Transverse colon (tissue), 4 donors: ENCODE measurements at regions of chr17 and their contacts with region 1.

Region 1: DNA sequence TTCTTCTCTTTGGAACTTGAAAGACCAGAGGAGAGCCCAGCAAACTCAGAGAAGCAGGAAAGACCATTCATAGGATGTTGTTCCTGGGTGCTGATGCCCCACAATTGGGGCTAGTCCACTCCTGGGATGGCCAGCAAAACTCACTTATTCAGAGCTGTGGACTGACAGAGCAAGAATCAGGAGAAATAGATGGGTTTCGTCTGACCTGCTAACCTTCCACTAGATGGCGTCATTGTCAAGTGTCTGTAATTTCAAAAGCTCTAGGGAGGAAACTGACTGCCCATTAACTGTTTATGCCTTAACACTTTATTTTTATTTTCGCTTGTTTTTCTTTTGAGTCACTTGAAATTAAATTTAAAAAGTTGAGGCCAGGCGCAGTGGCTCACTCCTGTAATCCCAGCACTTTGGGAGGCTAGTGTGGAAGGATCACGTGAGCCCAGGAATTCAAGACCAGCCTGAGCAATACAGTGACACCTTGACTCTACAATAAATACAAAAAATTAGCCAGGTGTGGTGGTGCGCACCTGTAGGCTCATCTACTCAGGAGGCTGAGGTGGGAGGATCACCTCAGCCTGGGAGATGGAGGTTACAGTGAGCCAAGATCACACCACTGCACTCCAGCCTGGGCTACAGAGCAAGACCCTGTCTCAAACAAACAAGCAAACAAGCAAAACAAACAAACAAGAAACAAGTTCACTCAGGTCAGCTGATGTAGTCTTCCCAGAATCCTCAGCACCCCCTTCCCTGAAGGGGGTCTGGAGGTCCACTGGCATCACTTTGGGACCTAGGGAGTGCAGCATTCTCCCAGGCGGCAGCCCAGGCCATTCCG is 28.6 kb upstream of the MILR1 start:
- DNase-seq: no peak
- H3K4me3 ChIP-seq: no peak overlapping the region
- H3K27ac ChIP-seq: no peak overlapping the region
- H3K4me1 ChIP-seq: peaks cover 0 to 7% (median 0%) of the 10 kb centered on the region in 4 donors
- H3K27me3 ChIP-seq: no peaks in the 10 kb centered on the region
- CTCF ChIP-seq: peak; percentile 65 to 76 (median 70)
- EP300 ChIP-seq: no peak
- POLR2A ChIP-seq: no peak

Region 2: DNA sequence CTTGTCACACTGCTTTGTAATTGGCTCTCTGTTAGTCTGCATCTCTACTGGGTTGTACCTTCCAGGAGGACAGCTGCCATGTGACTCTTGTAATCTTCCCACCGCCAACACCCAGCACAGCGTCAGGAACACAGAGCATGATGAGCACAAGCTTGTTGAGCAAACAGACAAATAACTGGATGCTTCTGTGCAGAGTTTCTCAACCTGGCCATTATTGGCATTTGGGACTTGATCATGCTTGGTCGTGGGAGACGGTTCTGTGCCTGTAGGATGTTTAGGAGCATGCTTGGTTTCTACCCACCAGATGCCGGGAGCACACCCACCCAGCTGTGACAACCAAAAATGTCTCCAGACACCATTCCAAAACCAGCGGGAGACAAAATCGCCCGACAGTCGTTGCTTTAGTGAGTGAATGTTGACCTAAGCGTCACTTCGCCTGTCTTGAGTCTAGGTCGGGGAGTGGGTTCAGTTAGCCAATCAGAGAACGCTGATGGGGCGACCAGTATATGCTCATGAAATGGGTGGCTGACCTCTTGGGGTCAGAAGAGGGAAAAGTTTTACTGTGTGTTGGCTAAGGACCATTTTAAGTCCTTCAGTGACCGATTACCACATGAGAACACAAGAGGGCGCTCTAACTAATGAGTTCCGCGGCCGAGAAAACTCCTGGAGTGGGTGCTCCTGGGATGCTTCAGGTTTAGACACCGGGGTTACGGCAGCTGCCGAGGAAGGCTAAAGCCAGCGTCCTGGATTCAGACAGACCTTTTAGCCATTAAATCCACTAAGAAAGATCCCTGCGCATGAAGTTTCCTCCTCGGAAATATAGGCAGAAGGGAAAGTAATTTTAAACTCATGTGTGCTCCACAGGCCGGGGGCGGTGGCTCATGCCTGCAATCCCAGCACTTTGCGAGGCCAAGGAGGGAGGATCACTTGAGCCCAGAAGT is 99.5 kb before region 1 on chr17:
- in situ Hi-C with region 1: loop called (anchors 5 to 10 kb)
- intact Hi-C with region 1: loop called (anchors 5 kb)
- DNase-seq: peak; percentile 60
- H3K4me3 ChIP-seq: no peak overlapping the region
- H3K27ac ChIP-seq: no peak overlapping the region
- H3K4me1 ChIP-seq: peaks cover 0 to 2% (median 0%) of the 10 kb centered on the region in 4 donors
- H3K27me3 ChIP-seq: no peaks in the 10 kb centered on the region
- CTCF ChIP-seq: peak; percentile 73 to 77 (median 75)
- EP300 ChIP-seq: no peak
- POLR2A ChIP-seq: no peak

Region 3: DNA sequence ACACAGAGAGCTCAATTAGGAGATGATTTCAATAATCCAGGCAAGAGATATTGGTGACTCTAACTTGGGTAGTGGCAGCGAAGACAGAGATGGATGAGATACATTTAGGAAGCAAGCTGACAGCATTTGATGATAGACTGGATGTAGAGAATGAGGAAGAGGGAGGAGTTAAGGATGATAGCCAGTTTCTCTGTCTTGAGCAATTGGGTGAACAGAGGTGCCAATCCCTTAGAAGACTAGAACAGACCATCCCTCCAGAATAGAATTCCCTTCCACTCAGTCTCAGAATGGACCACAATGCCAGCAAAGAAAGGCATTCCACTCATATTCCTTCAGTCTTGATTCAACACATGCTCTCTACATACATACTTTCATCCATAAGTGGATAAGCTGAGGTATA is 59.3 kb after region 1 on chr17:
- in situ Hi-C with region 1: loop called in 1 of 4 experiments (anchors 10 kb)
- intact Hi-C with region 1: no loop called
- DNase-seq: no peak
- H3K4me3 ChIP-seq: no peak overlapping the region
- H3K27ac ChIP-seq: no peak overlapping the region
- H3K4me1 ChIP-seq: no peaks in the 10 kb centered on the region
- H3K27me3 ChIP-seq: no peaks in the 10 kb centered on the region
- CTCF ChIP-seq: no peak
- EP300 ChIP-seq: no peak
- POLR2A ChIP-seq: no peak

Region 4: GRCh38 chr17:64488301-64488700 is 67.9 kb after region 1 on chr17:
- in situ Hi-C with region 1: loop called in 3 of 4 experiments (anchors 5 to 10 kb)
- intact Hi-C with region 1: no loop called
- DNase-seq: no peak
- H3K4me3 ChIP-seq: no peak overlapping the region
- H3K27ac ChIP-seq: no peak overlapping the region
- H3K4me1 ChIP-seq: no peaks in the 10 kb centered on the region
- H3K27me3 ChIP-seq: no peaks in the 10 kb centered on the region
- CTCF ChIP-seq: no peak
- EP300 ChIP-seq: no peak
- POLR2A ChIP-seq: no peak

Region 5: GRCh38 chr17:64496786-64497564 is 76.6 kb after region 1 on chr17 and contains the start of gene POLG2:
- in situ Hi-C with region 1: loop called in 1 of 4 experiments (anchors 10 kb)
- intact Hi-C with region 1: no loop called
- DNase-seq: peak; percentile 95
- H3K4me3 ChIP-seq: peak within 1 kb of the TSS; percentile 48 to 78 (median 68)
- H3K27ac ChIP-seq: peak within 1 kb of the TSS; percentile 86 to 92 (median 91)
- H3K4me1 ChIP-seq: peaks cover 18 to 73% (median 46%) of the 10 kb centered on the region in 4 donors
- H3K27me3 ChIP-seq: no peaks in the 10 kb centered on the region
- CTCF ChIP-seq: peak; percentile 44 to 79 (median 53)
- EP300 ChIP-seq: no peak
- POLR2A ChIP-seq: peak; percentile 76
- total RNA-seq, gene POLG2: 4.8 to 10.8 (median 6.3) TPM